Ascending aorta (tissue), 2 donors: ENCODE measurements at regions of chr16 and their contacts with region 1.

Region 1: DNA sequence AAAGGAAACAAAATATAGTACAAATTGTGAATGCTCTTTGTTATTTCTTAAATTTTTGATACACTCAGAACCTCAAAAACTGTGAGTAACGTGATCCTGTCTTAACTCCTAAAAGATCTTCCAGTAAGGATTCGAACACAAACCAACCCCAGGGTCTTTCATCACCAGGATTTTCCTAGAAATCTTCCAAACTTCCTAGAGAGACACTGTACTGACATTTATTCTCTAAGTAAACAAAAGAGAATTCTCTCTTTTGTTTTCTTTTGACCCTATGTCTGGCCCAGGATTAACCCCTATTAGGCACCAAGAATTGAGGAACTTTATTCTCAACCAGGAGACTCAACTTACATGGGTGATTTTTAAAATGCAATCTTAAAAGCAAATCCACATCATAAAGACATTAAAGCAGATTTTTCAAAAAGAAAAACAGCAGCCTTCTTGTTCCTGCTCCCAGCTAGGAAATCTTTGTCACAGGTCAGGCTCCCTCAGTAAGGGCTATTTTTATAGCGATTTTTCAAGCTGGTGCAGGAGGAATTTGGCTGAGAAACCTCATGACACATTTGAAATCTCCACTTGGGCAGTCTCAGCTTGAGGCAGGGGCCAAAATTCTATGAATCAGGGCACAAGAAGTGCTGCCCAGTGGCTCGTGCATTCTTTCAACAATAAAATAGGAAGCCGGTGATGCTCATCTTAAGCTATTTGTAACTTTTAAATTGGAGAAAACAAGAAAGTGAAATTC is 6.2 kb upstream of the SMG1 start:
- DNase-seq: peak; percentile 49 to 90
- H3K4me3 ChIP-seq: peak overlapping the region in 1 of 2 donors; percentile 38
- H3K27ac ChIP-seq: peak overlapping the region; percentile 92 to 94
- H3K4me1 ChIP-seq: peaks cover 0 to 18% of the 10 kb centered on the region in 2 donors
- H3K27me3 ChIP-seq: no peaks in the 10 kb centered on the region
- CTCF ChIP-seq: no peak

Region 2: GRCh38 chr16:18950469-18951185 is 18.2 kb after region 1 on chr16:
- intact Hi-C with region 1: loop called (anchors 2 kb)
- DNase-seq: no peak
- H3K4me3 ChIP-seq: no peak overlapping the region
- H3K27ac ChIP-seq: no peak overlapping the region
- H3K4me1 ChIP-seq: peaks cover 0 to 6% of the 10 kb centered on the region in 2 donors
- H3K27me3 ChIP-seq: no peaks in the 10 kb centered on the region
- CTCF ChIP-seq: no peak

Region 3: GRCh38 chr16:18969050-18969854 is 36.8 kb after region 1 on chr16:
- intact Hi-C with region 1: loop called (anchors 2 kb)
- DNase-seq: peak; percentile 41 to 93
- H3K4me3 ChIP-seq: peak overlapping the region; percentile 45 to 57
- H3K27ac ChIP-seq: no peak overlapping the region
- H3K4me1 ChIP-seq: no peaks in the 10 kb centered on the region
- H3K27me3 ChIP-seq: no peaks in the 10 kb centered on the region
- CTCF ChIP-seq: peak; percentile 78 to 95 (median 91)

Region 4: GRCh38 chr16:19005561-19006445 is 73.4 kb after region 1 on chr16:
- intact Hi-C with region 1: no loop called
- DNase-seq: no peak
- H3K4me3 ChIP-seq: no peak overlapping the region
- H3K27ac ChIP-seq: no peak overlapping the region
- H3K4me1 ChIP-seq: no peaks in the 10 kb centered on the region
- H3K27me3 ChIP-seq: no peaks in the 10 kb centered on the region
- CTCF ChIP-seq: no peak

Region 5: GRCh38 chr16:19075511-19075910 is 143.1 kb after region 1 on chr16:
- intact Hi-C with region 1: no loop called
- DNase-seq: peak in 1 of 2 donors; percentile 48
- H3K4me3 ChIP-seq: no peak overlapping the region
- H3K27ac ChIP-seq: no peak overlapping the region
- H3K4me1 ChIP-seq: no peaks in the 10 kb centered on the region
- H3K27me3 ChIP-seq: no peaks in the 10 kb centered on the region
- CTCF ChIP-seq: no peak

Region 6: DNA sequence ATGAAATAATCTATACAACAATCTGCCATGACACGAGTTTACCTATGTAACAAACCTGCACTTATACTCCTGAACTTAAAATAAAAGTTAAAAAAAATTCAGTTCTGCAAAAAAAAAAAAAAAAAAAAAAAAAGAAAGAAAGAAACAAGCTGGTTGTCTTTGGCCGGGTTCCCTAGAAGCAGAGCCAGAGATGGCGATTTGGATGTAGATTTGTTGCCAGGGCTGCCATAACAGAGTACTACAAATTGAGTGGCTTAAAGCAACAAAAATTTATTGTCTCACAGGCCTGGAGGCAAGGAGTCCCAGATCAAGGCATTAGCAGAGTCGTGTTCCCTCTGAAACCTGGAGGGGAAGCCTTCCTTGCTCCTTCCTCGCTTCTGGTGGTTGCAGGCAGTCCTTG is 256.0 kb after region 1 on chr16:
- intact Hi-C with region 1: no loop called
- DNase-seq: no peak
- H3K4me3 ChIP-seq: no peak overlapping the region
- H3K27ac ChIP-seq: peak overlapping the region in 1 of 2 donors; percentile 38
- H3K4me1 ChIP-seq: peaks cover 0 to 11% of the 10 kb centered on the region in 2 donors
- H3K27me3 ChIP-seq: no peaks in the 10 kb centered on the region
- CTCF ChIP-seq: no peak